Caco-2 (cell line): ENCODE measurements at regions of chr2 and their contacts with region 1.

Region 1: DNA sequence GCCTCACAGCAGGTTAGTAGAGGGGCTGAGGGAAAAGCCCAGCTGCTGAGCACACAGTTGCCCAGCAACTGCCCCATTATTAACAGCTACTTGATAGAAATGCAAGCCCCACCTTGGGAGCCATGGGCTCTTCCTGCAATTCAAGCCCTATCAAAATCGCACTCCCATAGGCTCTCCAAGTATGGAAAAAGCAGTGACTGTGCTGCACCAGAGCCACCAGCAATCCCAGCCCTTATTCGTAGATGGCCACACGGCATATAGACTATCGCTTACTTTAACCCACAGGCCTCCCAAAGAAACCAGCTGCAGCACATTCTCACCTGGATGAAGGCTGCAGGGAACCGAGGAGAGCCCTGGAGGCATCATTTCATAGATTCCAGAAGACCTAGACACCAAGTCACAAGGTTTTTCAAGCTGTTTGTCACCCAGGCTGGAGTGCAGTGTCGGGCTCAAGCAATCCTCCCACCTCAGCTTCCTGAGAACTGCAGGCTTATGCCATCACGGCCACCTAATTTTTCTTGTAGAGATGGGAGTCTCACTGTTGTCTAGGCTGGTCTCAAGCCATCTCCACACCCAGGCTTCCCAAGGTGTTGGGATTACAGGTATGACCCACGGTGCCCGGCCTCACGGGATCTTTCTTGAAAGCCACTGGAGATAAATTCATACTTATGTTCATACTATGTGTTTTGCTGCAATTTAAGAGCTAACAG is 11.3 kb downstream of the NCL start:
- DNase-seq: peak; percentile 35 to 54
- H3K4me3 ChIP-seq: no peak overlapping the region
- H3K4me3 Mint-ChIP-seq: no peak overlapping the region
- H3K27ac Mint-ChIP-seq: peak overlapping the region; percentile 66
- H3K4me1 ChIP-seq: no peaks in the 10 kb centered on the region
- H3K4me1 Mint-ChIP-seq: peaks cover 6% of the 10 kb centered on the region
- H3K27me3 ChIP-seq: no peaks in the 10 kb centered on the region
- H3K27me3 Mint-ChIP-seq: no peaks in the 10 kb centered on the region
- CTCF ChIP-seq: no peak

Region 2: GRCh38 chr2:231104115-231104713 is 348.7 kb before region 1 on chr2:
- CTCF ChIA-PET with region 1: interaction called, 4 read pairs
- POLR2A ChIA-PET with region 1: no interaction called
- intact Hi-C with region 1: loop called (anchors 5 kb)
- DNase-seq: peak in 1 of 2 experiments; percentile 46
- H3K4me3 ChIP-seq: no peak overlapping the region
- H3K4me3 Mint-ChIP-seq: no peak overlapping the region
- H3K27ac Mint-ChIP-seq: no peak overlapping the region
- H3K4me1 ChIP-seq: peaks cover 27% of the 10 kb centered on the region
- H3K4me1 Mint-ChIP-seq: peaks cover 13% of the 10 kb centered on the region
- H3K27me3 ChIP-seq: no peaks in the 10 kb centered on the region
- H3K27me3 Mint-ChIP-seq: no peaks in the 10 kb centered on the region
- CTCF ChIP-seq: peak; percentile 44 to 61

Region 3: DNA sequence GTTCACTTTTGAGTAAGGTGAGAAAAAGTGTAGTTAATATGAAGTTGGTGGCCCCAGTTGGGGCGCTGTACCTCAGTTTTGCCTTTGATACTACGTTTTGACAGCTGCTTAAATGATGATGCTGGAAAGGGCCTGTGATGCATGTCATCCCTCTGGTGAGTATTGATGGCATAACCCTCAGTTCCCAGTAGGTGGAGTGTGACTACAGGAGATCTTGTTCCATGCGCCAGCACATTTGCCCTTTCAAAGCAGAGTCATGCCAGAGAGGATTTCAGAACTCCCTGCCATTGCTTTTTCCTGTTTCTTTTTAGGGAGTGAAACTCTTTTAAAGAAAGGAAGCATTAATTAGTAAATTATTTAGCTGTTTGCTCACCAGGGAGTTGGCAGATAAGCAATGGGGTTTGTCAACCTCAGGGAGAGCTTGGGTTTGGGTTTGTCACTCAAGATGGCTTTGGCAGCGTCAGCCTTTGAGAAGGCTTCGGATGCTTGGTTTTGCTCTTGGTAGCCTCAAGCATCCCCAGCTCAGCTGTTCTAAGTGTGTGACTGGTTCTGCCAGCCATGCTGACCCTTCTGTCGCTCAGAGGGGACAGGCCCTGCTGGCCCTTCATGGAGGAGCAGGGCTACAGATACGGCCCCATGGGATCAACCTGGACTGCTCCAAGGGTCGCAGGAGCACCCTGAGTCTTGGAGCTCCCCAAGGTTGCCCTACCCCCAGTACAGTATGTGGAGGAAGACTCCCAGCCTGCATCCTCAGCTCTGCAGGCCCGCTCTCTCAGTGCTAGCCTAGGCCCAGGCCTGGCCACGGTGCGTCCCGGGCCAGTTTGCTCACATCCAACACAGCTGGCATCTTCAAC is 225.4 kb before region 1 on chr2:
- CTCF ChIA-PET with region 1: interaction called, 3 read pairs
- POLR2A ChIA-PET with region 1: no interaction called
- intact Hi-C with region 1: loop called (anchors 1 kb)
- DNase-seq: peak; percentile 59 to 63
- H3K4me3 ChIP-seq: no peak overlapping the region
- H3K4me3 Mint-ChIP-seq: no peak overlapping the region
- H3K27ac Mint-ChIP-seq: no peak overlapping the region
- H3K4me1 ChIP-seq: no peaks in the 10 kb centered on the region
- H3K4me1 Mint-ChIP-seq: peaks cover 6% of the 10 kb centered on the region
- H3K27me3 ChIP-seq: no peaks in the 10 kb centered on the region
- H3K27me3 Mint-ChIP-seq: no peaks in the 10 kb centered on the region
- CTCF ChIP-seq: peak; percentile 68 to 71

Region 4: DNA sequence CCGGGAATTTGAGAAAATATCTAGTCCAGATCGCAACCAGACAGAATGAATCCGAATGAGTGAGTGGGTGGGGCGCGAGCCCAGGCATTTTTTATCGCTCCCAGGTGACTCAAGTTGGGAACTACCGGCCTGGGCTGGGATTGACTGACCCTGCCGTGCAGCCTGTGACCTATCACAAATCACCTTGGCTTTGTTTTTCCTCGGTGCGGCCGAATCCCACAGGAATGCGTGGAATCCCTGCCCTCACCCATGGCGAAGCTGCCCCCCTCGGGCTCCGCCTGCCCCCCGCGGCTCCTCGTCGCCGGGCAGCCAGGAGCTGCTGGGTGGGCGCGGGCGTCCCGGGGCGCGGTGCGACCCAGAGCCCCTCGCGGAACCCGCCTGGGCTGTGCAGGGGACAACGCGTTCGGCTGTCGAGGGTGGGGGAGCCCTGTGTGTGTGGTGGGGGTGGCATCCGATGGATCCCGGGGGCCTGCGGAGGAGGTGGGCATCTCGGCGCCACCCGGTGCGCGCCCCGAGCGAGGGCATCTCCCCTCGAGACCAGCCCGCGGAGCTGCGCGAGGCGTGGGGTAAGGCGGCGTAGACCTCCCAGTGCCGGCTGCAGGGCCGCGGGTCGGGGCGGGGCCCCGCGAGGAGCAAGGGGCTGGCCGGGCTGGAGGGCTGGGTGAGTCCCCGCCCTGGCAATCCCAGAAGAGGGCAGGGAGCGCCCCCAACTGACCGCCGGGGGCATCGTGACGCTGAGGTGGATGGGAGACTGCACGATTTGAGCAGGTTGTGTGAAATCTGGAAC is 40.9 kb before region 1 on chr2:
- CTCF ChIA-PET with region 1: interaction called, 3 read pairs
- POLR2A ChIA-PET with region 1: no interaction called
- intact Hi-C with region 1: loop called (anchors 5 kb)
- DNase-seq: no peak
- H3K4me3 ChIP-seq: no peak overlapping the region
- H3K4me3 Mint-ChIP-seq: no peak overlapping the region
- H3K27ac Mint-ChIP-seq: no peak overlapping the region
- H3K4me1 ChIP-seq: peaks cover 12% of the 10 kb centered on the region
- H3K4me1 Mint-ChIP-seq: peaks cover 6% of the 10 kb centered on the region
- H3K27me3 ChIP-seq: no peaks in the 10 kb centered on the region
- H3K27me3 Mint-ChIP-seq: no peaks in the 10 kb centered on the region
- CTCF ChIP-seq: no peak

Region 5: DNA sequence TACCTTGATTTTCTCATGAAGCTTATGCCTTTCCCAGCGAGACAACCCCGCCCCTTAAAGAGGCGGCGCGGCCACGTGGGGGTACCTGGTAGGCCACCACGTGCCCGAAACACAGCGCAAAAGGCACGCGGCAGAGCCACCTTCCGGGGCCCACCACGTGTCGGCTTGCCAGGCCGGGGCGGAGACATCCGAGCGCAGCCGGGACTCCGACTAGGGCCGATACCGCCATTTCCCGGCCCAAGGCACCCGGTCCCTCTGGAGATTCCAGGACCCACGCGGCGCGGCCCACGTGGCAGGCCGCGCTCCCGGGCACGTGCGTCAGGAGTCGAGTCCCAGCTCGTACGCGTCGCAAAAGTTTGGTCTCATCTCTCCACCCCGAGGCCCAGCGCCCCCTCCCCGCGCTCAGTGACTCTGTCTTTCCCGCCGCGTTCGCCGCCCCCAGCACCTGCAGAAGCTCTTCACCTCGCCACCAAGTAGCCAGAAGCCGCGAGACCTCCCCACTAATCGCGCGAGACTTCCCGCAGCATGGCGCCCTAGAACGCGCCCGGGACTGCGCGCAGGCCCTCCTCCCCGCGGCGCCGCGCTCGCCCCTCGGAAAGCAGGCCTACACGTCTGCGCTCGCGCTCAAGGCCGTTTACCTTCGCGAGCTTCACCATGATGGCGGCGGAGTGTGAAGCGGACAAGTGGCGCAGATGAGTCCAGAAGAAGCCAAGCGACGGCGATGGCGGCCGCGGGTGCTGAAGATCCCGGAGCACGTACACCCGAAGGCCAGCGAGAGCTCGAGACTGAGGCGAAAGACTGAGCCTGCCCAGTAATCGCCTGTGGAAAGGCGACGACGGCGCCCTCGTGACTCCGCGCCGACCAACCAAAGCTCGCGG is 11.0 kb after region 1 on chr2 and contains the start of gene NCL:
- CTCF ChIA-PET with region 1: interaction called, 9 read pairs
- POLR2A ChIA-PET with region 1: interaction called, 26 read pairs
- intact Hi-C with region 1: no loop called
- DNase-seq: peak; percentile 78 to 81
- H3K4me3 ChIP-seq: peak within 1 kb of the TSS; percentile 96
- H3K4me3 Mint-ChIP-seq: peak within 1 kb of the TSS; percentile 89
- H3K27ac Mint-ChIP-seq: peak within 1 kb of the TSS; percentile 98
- H3K4me1 ChIP-seq: no peaks in the 10 kb centered on the region; the same call in 1 of the 2 replicates
- H3K4me1 Mint-ChIP-seq: peaks cover 13% of the 10 kb centered on the region
- H3K27me3 ChIP-seq: no peaks in the 10 kb centered on the region
- H3K27me3 Mint-ChIP-seq: peaks cover 2% of the 10 kb centered on the region
- CTCF ChIP-seq: no peak
- total RNA-seq, gene NCL: 608 and 612 TPM in 2 replicates